A549 (cell line): ENCODE measurements at regions of chr10 and their contacts with region 1.

Region 1: DNA sequence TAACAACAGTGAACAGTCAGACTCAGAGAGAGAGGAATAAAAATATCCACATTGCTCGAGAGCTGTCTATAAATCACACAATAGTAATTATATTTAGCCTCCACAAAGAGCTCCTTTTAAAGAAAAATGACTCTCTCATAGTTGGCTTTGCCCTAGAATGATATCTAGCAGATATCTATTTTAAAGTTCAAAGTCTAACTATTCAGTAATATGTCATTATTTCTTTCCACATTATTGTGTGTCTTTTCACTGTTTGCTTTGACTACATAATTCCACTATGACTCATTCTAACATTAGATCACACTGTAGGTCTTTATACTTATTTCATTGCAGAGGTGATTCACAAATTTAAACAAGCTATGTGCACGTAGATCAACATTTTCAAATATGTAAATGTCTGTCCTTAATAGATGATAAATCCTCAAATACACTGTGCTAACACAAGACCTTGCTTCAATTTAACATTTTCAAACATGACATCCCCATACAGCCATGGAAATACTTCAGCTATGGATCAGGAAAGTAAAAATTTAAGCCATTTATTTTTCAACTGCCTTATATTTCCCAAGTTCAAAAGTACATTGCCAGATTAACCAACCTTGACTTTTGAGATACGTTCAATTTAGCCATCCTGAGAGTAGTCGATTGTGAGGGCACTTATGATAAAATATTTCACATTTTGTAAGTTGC is 99.9 kb upstream of the AKR1E2 start:
- DNase-seq: peak; percentile 26 to 90
- ATAC-seq: peak; percentile 94 to 97
- H3K4me3 ChIP-seq: peak overlapping the region; percentile 15; the same call in 1 of the 3 replicates
- H3K27ac ChIP-seq: peak overlapping the region; percentile 81 to 83
- H3K4me1 ChIP-seq: peaks cover 27% of the 10 kb centered on the region
- CTCF ChIP-seq: no peak
- EP300 ChIP-seq: peak; percentile 72 to 87; a peak in 3 of 5 replicates
- POLR2A ChIP-seq: no peak
- RAD21 ChIP-seq: peak; percentile 31 to 66

Region 2: GRCh38 chr10:4678023-4678950 is 47.8 kb before region 1 on chr10:
- CTCF ChIA-PET with region 1: no interaction called
- POLR2A ChIA-PET with region 1: interaction called, 11 read pairs
- DNase-seq: peak; percentile 28 to 93
- ATAC-seq: peak; percentile 88 to 94
- H3K4me3 ChIP-seq: peak overlapping the region; percentile 5; the same call in 1 of the 3 replicates
- H3K27ac ChIP-seq: peak overlapping the region; percentile 86 to 87
- H3K4me1 ChIP-seq: peaks cover 46% of the 10 kb centered on the region
- CTCF ChIP-seq: no peak
- EP300 ChIP-seq: peak in 1 of 2 experiments; percentile 46; a peak in 2 of 5 replicates
- POLR2A ChIP-seq: no peak
- RAD21 ChIP-seq: no peak

Region 3: DNA sequence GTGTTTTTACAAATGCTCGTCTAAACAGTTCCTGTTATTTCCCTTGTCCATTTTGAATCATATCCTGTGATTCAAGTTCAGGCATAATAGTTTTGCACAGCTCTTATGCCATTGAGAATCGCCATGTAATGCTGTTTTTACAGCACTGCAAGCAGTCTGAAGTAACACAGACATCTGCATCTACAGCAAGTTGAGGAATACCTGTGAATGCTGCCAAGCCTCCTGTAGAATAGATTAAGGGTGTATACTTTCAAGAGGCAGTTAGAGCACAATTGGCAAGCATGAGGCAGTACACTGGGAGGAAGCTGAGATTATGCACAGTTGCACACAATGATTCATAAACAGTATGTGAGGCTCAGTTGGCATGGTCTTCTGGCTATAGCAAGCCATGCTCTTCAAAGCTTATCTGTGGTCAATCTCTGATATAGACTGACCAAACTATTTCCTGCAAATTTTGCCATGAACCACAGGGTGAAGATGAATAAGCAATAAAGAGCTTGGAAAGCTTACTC is 22.0 kb before region 1 on chr10:
- CTCF ChIA-PET with region 1: interaction called, 3 read pairs
- POLR2A ChIA-PET with region 1: interaction called, 15 read pairs
- DNase-seq: peak; percentile 18 to 62
- ATAC-seq: peak; percentile 85 to 92
- H3K4me3 ChIP-seq: no peak overlapping the region
- H3K27ac ChIP-seq: peak overlapping the region; percentile 41 to 59
- H3K4me1 ChIP-seq: peaks cover 34% of the 10 kb centered on the region; the same call in 2 of the 3 replicates
- CTCF ChIP-seq: no peak
- EP300 ChIP-seq: no peak
- POLR2A ChIP-seq: no peak
- RAD21 ChIP-seq: no peak